Psoas muscle (tissue), 8 donors: ENCODE measurements at regions of chr17 and their contacts with region 1.

Region 1: DNA sequence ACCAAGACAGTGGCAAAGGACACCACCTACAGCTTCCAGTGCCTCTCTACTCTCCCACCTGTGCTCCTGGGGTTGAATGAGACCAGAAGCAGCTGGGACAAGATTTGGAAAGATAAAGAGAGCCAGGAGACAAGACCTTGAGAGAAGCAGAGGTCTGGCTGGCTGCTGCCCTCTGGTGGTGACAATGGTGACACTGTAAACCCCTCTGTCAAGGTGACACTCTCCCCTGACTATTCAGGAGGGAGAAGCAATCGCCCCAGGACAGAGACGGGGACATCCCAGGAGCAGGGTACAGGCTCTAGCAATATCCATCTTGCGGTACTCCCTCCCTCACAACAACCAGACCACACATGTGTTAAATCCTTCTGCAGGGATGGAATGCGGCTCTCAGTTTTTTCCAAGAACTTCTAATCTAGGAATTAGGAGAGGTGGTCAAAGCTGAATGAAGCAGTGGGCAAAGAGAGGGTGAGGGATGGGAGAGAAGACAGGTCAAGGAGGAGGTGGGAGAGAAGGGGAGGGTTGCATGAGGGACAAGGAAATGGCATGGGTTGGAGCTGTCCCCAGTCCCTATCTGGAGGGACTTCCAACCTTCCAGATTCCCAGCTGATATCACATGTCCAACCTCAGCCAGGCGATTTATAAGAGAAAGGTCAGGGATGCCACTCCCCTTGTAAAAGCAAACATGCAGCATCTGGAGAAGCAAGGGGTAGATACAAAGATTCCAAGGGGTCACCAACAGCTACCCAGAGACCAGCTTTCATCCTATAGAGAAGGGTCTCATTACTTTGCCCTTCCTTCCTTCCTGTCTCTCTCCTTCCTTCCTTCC is 2.9 kb downstream of the PHOSPHO1 start:
- DNase-seq: peak; percentile 78 to 87
- ATAC-seq: peak; percentile 51 to 63 (median 61)
- H3K4me3 ChIP-seq: no peak overlapping the region
- H3K27ac ChIP-seq: no peak overlapping the region
- H3K4me1 ChIP-seq: peaks cover 8% of the 10 kb centered on the region
- H3K27me3 ChIP-seq: peaks cover 0 to 27% (median 10%) of the 10 kb centered on the region in 3 donors
- CTCF ChIP-seq: peak; percentile 83

Region 2: DNA sequence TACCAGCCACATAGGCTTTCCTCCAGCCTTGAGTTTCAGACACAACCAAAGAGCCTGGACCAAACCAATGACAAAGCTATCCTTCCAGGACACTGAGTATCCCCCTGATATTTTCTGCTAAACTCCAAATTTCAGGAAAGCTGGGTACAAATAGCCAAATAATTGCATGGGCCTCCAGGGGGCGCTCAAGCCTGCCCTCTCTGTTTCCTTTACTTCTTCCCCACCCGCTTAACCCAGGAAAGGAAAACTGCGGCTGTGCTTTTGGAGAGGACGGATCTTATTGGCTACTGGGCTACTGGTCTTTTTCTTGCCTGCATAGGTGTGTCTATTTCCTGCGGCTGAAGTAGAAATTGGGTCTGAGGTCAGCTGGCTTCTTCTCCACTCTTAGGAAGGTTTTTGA is 47.3 kb before region 1 on chr17:
- intact Hi-C with region 1: loop called (anchors 1 to 2 kb)
- DNase-seq: peak; percentile 52 to 70
- ATAC-seq: peak in 3 of 4 donors; percentile 53 to 71 (median 62)
- H3K4me3 ChIP-seq: no peak overlapping the region
- H3K27ac ChIP-seq: no peak overlapping the region
- H3K4me1 ChIP-seq: no peaks in the 10 kb centered on the region
- H3K27me3 ChIP-seq: peaks cover 0 to 6% (median 0%) of the 10 kb centered on the region in 3 donors
- CTCF ChIP-seq: peak; percentile 72

Region 3: GRCh38 chr17:49191917-49192741 is 35.5 kb before region 1 on chr17:
- intact Hi-C with region 1: loop called in 1 of 2 experiments (anchors 5 kb)
- DNase-seq: peak; percentile 88 to 95
- ATAC-seq: peak; percentile 86 to 93 (median 87)
- H3K4me3 ChIP-seq: peak overlapping the region; percentile 86
- H3K27ac ChIP-seq: peak overlapping the region; percentile 95
- H3K4me1 ChIP-seq: no peaks in the 10 kb centered on the region
- H3K27me3 ChIP-seq: no peaks in the 10 kb centered on the region
- CTCF ChIP-seq: no peak

Region 4: GRCh38 chr17:49290690-49291359 is 63.2 kb after region 1 on chr17:
- intact Hi-C with region 1: loop called in 1 of 2 experiments (anchors 5 kb)
- DNase-seq: no peak
- ATAC-seq: peak in 2 of 4 donors; percentile 50 to 55
- H3K4me3 ChIP-seq: no peak overlapping the region
- H3K27ac ChIP-seq: no peak overlapping the region
- H3K4me1 ChIP-seq: no peaks in the 10 kb centered on the region
- H3K27me3 ChIP-seq: no peaks in the 10 kb centered on the region
- CTCF ChIP-seq: peak; percentile 67

Region 5: DNA sequence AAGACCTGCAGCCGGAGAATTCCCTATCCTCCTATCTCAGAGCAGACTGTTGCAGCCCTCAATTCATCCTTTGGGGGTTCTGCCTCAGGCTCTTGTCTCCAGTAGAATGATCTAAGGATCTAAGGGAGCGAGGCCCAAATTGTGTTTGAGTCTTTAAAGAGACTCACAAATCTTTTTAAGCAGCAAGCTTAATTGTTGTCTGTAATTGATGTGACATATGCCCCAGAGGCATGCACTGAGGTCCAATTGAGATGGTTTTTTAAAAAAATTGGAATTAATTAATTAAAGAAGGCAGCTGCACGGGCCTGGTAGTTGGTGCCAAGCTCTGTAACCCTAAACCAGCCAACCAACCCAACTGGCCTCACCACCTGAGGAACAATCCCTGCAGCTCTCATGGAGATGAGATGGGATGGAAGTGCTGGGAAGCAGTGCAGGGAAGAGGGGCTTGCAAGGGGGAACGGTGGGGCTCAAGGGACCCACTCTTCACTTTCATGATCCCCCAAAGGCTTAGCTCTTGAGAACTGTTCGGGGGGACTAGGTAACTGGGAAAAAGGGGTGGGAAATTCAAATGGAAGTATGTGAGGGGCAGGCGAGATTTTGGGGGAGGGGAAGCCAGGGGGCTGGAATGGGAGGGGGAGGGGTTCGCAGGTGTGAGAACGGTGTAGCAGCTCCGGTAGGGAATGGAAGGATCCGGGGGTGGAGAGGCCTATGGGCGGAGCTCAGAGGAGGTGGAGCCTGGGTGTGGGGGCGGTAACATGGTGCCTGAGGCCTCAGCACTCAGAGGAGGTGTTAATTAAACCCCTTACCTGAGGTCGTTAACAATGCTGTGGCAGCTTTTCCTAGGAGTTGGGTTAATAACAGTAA is 143.6 kb after region 1 on chr17:
- intact Hi-C with region 1: no loop called
- DNase-seq: no peak
- ATAC-seq: no peak
- H3K4me3 ChIP-seq: no peak overlapping the region
- H3K27ac ChIP-seq: no peak overlapping the region
- H3K4me1 ChIP-seq: no peaks in the 10 kb centered on the region
- H3K27me3 ChIP-seq: no peaks in the 10 kb centered on the region
- CTCF ChIP-seq: no peak